PC-3 (cell line): ENCODE measurements at regions of chr17 and their contacts with region 1.

Region 1: GRCh38 chr17:62065598-62066468 is 755 bp upstream of the MED13 start:
- DNase-seq: peak; percentile 99
- ATAC-seq: peak; percentile 94
- H3K4me3 ChIP-seq: peak overlapping the region; percentile 96
- H3K27ac ChIP-seq: peak overlapping the region; percentile 82
- H3K4me1 ChIP-seq: peaks cover 24% of the 10 kb centered on the region
- H3K27me3 ChIP-seq: no peaks in the 10 kb centered on the region
- CTCF ChIP-seq: peak; percentile 98

Region 2: DNA sequence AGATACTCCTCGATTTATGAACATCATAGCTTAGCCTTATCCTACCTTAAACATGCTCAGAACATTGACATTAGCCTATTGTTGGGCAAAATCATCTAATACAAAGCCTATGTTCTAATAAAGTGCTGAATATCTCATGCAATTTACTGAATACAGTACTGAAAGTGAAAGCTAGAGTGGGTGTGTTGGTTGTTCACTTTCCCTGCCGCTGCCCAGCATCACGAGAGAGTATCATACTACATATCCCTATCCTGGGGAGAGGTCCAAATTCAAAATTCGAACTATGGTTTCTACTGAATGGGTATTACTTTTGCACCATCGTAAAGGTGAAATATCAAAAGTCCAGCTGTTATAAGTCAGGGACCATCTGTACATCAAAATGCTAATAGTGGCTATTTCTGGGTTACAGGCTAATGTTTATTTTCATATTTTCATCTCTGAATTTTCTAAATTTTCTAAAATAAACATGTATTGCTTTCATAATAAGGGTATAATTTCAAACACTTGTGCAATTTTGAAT is 529.3 kb before region 1 on chr17:
- CTCF ChIA-PET with region 1: no interaction called
- POLR2A ChIA-PET with region 1: no interaction called
- intact Hi-C with region 1: no loop called
- DNase-seq: no peak
- ATAC-seq: no peak
- H3K4me3 ChIP-seq: no peak overlapping the region
- H3K27ac ChIP-seq: no peak overlapping the region
- H3K4me1 ChIP-seq: no peaks in the 10 kb centered on the region
- H3K27me3 ChIP-seq: no peaks in the 10 kb centered on the region
- CTCF ChIP-seq: no peak

Region 3: DNA sequence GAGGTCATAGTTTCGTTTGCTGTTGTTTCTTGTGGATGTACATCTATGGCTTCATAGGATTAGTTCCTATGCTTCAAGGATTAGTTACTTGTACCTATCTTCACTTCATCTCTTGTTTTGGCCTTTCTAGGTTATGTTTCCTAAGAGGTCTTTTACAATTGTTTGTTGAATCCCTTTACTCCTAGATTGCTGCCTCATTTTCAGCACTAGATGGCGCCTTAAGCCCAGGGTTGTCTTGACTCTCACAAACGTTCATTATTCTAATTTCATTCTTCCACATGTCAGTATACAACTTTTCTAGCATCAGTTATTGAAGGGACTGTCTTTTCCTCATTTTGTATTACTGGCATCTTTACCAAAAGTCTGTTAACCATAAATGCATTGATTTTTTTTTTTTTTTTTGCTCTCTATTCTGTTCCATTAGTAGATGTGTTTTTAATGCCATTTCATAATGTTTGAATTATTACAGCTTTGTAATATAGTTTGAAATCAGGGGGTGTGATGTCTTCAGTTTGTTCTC is 429.9 kb before region 1 on chr17:
- CTCF ChIA-PET with region 1: no interaction called
- POLR2A ChIA-PET with region 1: no interaction called
- intact Hi-C with region 1: loop called (anchors 5 kb)
- DNase-seq: peak; percentile 86
- ATAC-seq: peak; percentile 73
- H3K4me3 ChIP-seq: no peak overlapping the region
- H3K27ac ChIP-seq: no peak overlapping the region
- H3K4me1 ChIP-seq: no peaks in the 10 kb centered on the region
- H3K27me3 ChIP-seq: no peaks in the 10 kb centered on the region
- CTCF ChIP-seq: peak; percentile 97

Region 4: GRCh38 chr17:61875285-61875684 is 190.5 kb before region 1 on chr17:
- CTCF ChIA-PET with region 1: interaction called, 12 read pairs
- POLR2A ChIA-PET with region 1: interaction called, 5 read pairs
- intact Hi-C with region 1: no loop called
- DNase-seq: no peak
- ATAC-seq: peak; percentile 89
- H3K4me3 ChIP-seq: no peak overlapping the region
- H3K27ac ChIP-seq: no peak overlapping the region
- H3K4me1 ChIP-seq: no peaks in the 10 kb centered on the region
- H3K27me3 ChIP-seq: no peaks in the 10 kb centered on the region
- CTCF ChIP-seq: no peak

Region 5: DNA sequence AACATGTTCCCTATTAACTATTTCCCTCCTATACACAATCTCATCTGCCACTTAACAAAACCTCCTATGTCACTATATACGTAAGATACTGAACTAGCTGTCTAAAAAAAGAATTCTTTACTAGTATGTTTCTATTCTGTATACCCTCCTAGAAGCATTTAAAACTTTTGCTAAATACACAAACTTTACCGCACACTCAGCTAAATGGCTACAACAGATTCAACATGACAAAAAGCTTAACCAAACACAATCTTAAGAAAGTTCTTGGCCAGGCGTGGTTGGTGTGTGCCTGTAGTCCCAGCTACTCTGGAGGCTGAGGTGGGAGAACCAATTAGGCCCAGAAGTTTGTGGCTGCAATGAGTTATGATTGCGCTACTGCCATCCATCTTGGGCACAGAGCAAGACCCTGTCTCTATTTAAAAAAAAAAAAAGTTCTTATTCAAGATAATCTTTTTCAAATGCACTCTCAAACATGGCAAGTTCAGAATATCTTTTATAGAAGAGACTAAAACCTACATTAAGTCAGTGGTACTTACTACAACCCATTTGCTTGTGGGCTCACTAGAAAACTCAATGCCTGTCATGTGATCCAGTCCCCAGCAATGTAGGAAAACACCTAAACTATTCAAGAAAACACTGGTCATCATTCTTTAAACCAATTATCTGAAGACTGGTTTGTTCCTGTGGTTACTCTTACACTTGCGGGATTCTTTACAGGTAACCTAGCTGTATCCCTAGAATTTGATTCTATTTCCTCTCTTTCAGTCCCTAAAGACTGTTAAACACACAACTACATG is 20.5 kb before region 1 on chr17:
- CTCF ChIA-PET with region 1: no interaction called
- POLR2A ChIA-PET with region 1: interaction called, 20 read pairs
- intact Hi-C with region 1: no loop called
- DNase-seq: no peak
- ATAC-seq: no peak
- H3K4me3 ChIP-seq: no peak overlapping the region
- H3K27ac ChIP-seq: no peak overlapping the region
- H3K4me1 ChIP-seq: peaks cover 1% of the 10 kb centered on the region; the same call in 1 of the 2 replicates
- H3K27me3 ChIP-seq: no peaks in the 10 kb centered on the region
- CTCF ChIP-seq: no peak

Region 6: DNA sequence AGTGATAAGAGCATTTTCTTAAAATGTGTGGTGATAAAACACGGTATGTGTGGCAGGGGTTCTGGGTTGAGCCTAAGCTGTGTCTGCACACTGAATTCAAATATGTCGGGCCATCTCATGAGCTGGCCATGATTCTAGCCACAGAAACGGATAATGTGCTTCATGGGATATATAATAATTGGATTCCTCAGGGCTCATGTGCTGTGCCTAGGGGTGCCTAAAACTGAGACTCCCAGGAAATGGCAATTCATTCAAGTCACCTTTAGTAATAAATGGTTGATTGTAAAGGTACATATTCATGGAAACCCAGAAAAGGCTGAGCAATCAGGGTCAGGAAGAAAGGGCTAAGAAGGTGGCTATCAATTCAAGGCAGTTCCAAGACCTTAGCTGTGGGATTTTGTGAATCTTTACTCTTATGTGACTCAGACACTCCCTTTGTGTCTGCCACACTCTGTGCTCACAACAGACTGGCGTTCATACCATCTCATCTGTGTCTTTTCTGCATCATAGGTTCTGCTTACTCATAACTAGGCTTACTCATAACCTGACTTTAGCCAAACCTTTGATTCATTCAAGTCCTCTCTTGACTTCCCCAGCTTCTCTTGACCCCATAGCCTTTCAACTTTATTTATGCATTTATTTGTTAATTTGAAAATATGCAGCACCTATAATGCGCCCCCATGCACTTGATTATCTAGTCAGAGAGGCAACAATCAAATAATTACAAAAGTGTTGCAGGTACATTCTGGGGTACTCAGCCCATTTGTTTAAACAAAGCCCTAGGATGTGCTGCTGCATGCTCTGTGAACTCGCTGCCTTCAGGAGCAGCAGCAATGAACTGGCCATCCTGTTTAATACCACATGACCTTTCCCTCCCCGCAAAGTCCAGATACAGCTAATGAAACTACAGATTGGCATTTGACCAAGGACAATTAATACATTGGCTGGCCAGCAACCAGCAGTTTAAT is 27.6 kb after region 1 on chr17:
- CTCF ChIA-PET with region 1: interaction called, 8 read pairs
- POLR2A ChIA-PET with region 1: no interaction called
- intact Hi-C with region 1: loop called (anchors 2 kb)
- DNase-seq: peak; percentile 97
- ATAC-seq: peak; percentile 100
- H3K4me3 ChIP-seq: no peak overlapping the region
- H3K27ac ChIP-seq: peak overlapping the region; percentile 93
- H3K4me1 ChIP-seq: peaks cover 19% of the 10 kb centered on the region
- H3K27me3 ChIP-seq: no peaks in the 10 kb centered on the region
- CTCF ChIP-seq: no peak

Region 7: GRCh38 chr17:62193287-62193686 is 127.5 kb after region 1 on chr17:
- CTCF ChIA-PET with region 1: no interaction called
- POLR2A ChIA-PET with region 1: no interaction called
- intact Hi-C with region 1: no loop called
- DNase-seq: no peak
- ATAC-seq: no peak
- H3K4me3 ChIP-seq: no peak overlapping the region
- H3K27ac ChIP-seq: no peak overlapping the region
- H3K4me1 ChIP-seq: peaks cover 6% of the 10 kb centered on the region
- H3K27me3 ChIP-seq: no peaks in the 10 kb centered on the region
- CTCF ChIP-seq: no peak